Mammary epithelial cell (primary cell): ENCODE measurements at regions of chr20 and their contacts with region 1.

Region 1: GRCh38 chr20:51639206-51639832 is 96.8 kb upstream of the NFATC2 start:
- DNase-seq: peak; percentile 37
- H3K4me3 ChIP-seq: no peak overlapping the region
- H3K27ac ChIP-seq: no peak overlapping the region
- H3K4me1 ChIP-seq: no peaks in the 10 kb centered on the region
- H3K27me3 ChIP-seq: no peaks in the 10 kb centered on the region
- CTCF ChIP-seq: peak; percentile 75 to 80

Region 2: GRCh38 chr20:51687062-51687461 is 47.7 kb after region 1 on chr20:
- CTCF ChIA-PET with region 1: no interaction called
- dilution Hi-C with region 1: no loop called
- in situ Hi-C with region 1: no loop called
- intact Hi-C with region 1: loop called (anchors 1 kb)
- DNase-seq: peak; percentile 63
- H3K4me3 ChIP-seq: no peak overlapping the region
- H3K27ac ChIP-seq: peak overlapping the region; percentile 59
- H3K4me1 ChIP-seq: peaks cover 10% of the 10 kb centered on the region
- H3K27me3 ChIP-seq: no peaks in the 10 kb centered on the region
- CTCF ChIP-seq: no peak

Region 3: GRCh38 chr20:51767010-51767558 is 127.8 kb after region 1 on chr20:
- CTCF ChIA-PET with region 1: no interaction called
- dilution Hi-C with region 1: no loop called
- in situ Hi-C with region 1: no loop called
- intact Hi-C with region 1: loop called (anchors 10 kb)
- DNase-seq: peak; percentile 80
- H3K4me3 ChIP-seq: peak overlapping the region; percentile 54 to 70 (median 56)
- H3K27ac ChIP-seq: peak overlapping the region; percentile 19
- H3K4me1 ChIP-seq: peaks cover 6% of the 10 kb centered on the region
- H3K27me3 ChIP-seq: no peaks in the 10 kb centered on the region
- CTCF ChIP-seq: no peak

Region 4: GRCh38 chr20:51966291-51966971 is 327.1 kb after region 1 on chr20:
- CTCF ChIA-PET with region 1: interaction called, 5 read pairs
- dilution Hi-C with region 1: no loop called
- in situ Hi-C with region 1: no loop called
- intact Hi-C with region 1: loop called (anchors 1 kb)
- DNase-seq: peak; percentile 36
- H3K4me3 ChIP-seq: no peak overlapping the region
- H3K27ac ChIP-seq: no peak overlapping the region
- H3K4me1 ChIP-seq: no peaks in the 10 kb centered on the region
- H3K27me3 ChIP-seq: no peaks in the 10 kb centered on the region
- CTCF ChIP-seq: peak; percentile 46 to 76

Region 5: GRCh38 chr20:51978081-51978501 is 338.8 kb after region 1 on chr20:
- CTCF ChIA-PET with region 1: no interaction called
- dilution Hi-C with region 1: no loop called
- in situ Hi-C with region 1: no loop called
- intact Hi-C with region 1: no loop called
- DNase-seq: no peak
- H3K4me3 ChIP-seq: no peak overlapping the region
- H3K27ac ChIP-seq: no peak overlapping the region
- H3K4me1 ChIP-seq: no peaks in the 10 kb centered on the region
- H3K27me3 ChIP-seq: no peaks in the 10 kb centered on the region
- CTCF ChIP-seq: no peak

Region 6: DNA sequence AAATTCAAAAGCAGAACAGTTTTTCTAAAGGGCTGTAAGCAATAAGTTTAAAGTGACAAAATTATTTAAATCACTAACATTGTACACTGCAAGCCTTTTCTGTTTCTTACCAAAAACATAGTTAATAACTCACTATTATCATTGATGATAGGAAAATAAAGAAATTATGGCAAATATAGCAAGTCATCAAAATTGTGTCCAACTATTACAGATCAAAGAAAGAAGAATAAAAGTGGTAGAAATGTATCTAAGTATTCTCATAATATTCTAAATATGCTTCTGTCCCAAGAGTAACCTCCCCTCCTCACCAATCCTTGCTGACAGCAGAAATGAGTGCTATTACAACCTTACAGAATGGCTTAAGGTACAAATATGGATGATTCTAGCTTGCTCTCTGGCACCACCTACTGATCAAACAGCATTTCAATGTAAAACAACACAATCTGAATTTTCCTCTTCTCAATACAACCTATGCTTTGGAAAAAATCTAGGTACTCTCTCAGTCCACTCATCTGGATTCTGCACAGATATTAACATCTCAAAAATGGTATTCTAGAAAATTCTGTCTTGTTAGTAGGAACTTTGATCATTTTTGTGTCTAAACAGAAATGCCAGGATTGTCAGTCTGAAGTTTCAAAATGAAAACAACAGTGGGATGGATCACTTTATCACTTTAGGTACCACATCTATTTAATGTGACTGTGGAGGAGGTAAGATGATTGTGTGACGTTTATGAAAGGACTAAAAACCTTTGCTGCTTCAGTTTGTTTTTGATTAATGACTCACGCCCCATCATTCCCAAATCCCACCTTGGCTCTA is 511.3 kb after region 1 on chr20:
- CTCF ChIA-PET with region 1: no interaction called
- dilution Hi-C with region 1: no loop called
- in situ Hi-C with region 1: no loop called
- intact Hi-C with region 1: loop called (anchors 1 kb)
- DNase-seq: peak; percentile 26
- H3K4me3 ChIP-seq: no peak overlapping the region
- H3K27ac ChIP-seq: no peak overlapping the region
- H3K4me1 ChIP-seq: no peaks in the 10 kb centered on the region
- H3K27me3 ChIP-seq: no peaks in the 10 kb centered on the region
- CTCF ChIP-seq: peak; percentile 82 to 89